ENCODE measurements at regions of chr6 and their contacts with region 1.

Region 1: DNA sequence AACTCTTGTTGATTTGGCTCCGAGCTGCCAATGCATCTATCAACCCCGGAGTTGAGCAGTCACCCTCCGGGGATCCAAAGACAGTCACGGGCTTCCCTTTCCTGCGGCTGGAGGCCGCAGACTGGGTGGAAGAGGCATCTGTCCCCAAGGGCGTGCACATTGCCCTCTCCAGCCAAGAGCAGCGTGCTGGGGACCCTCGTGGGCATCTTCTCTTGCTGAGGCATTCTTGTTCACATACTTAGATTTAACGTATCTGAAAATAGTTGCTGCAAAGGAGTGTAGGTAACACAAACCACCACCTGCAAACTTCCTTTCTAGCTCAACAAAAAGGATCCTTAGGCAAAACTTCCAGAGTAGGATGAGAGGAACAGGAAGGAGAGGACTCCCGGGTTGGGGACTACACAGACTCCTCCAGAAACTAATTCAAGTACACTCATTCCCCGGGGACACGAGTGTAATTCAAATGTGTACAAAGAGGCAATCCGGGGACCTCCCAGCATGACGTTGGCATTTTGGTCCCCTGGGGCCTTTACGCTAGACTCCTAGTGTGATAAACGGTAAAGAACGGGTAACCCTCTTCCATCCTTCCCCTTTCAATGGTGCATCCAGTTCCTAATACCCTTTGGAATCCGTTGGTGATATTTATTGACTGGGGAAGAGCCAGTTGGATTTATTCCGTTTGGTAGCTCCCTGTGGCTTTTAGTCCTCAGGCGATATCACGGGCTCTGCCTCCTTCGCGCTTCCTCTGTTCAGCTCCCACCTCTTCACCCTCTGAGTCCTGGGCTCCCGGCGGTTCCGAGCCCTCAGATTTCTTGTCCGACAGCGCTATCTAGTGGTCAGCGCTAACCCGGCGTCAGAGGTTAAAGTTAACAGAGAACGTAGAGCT is 2.7 kb upstream of the COL12A1 start:
- DNase-seq: peak; percentile 81 to 88
- ATAC-seq: peak; percentile 70 to 81 (median 75)
- H3K4me3 ChIP-seq: peak overlapping the region; percentile 47
- H3K27ac ChIP-seq: no peak overlapping the region
- H3K4me1 ChIP-seq: peaks cover 25% of the 10 kb centered on the region
- H3K27me3 ChIP-seq: peaks cover 0 to 48% (median 12%) of the 10 kb centered on the region in 3 donors
- CTCF ChIP-seq: peak; percentile 88

Region 2: DNA sequence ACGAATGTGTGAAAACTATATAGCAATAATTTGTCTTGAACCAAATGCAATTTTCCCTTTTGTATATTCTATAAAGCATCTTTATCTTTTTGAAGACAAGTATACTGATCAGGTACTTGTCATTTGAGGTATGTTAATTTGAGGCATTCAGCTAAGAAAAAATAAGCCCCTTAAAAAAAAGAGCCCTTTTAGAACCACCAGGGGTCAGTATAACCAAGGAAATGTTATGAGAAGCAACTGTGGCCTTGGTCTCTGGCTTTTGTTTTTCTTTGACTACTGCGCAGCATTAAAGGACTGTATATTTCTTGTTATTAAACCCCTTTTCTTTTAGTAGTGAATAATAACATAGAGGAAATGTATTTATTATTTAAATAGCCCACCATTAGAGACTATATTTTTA is 1469.4 kb before region 1 on chr6:
- intact Hi-C with region 1: loop called (anchors 2 to 5 kb)
- DNase-seq: no peak
- ATAC-seq: peak in 1 of 4 donors; percentile 48
- H3K4me3 ChIP-seq: no peak overlapping the region
- H3K27ac ChIP-seq: no peak overlapping the region
- H3K4me1 ChIP-seq: no peaks in the 10 kb centered on the region
- H3K27me3 ChIP-seq: no peaks in the 10 kb centered on the region
- CTCF ChIP-seq: peak; percentile 72

Region 3: DNA sequence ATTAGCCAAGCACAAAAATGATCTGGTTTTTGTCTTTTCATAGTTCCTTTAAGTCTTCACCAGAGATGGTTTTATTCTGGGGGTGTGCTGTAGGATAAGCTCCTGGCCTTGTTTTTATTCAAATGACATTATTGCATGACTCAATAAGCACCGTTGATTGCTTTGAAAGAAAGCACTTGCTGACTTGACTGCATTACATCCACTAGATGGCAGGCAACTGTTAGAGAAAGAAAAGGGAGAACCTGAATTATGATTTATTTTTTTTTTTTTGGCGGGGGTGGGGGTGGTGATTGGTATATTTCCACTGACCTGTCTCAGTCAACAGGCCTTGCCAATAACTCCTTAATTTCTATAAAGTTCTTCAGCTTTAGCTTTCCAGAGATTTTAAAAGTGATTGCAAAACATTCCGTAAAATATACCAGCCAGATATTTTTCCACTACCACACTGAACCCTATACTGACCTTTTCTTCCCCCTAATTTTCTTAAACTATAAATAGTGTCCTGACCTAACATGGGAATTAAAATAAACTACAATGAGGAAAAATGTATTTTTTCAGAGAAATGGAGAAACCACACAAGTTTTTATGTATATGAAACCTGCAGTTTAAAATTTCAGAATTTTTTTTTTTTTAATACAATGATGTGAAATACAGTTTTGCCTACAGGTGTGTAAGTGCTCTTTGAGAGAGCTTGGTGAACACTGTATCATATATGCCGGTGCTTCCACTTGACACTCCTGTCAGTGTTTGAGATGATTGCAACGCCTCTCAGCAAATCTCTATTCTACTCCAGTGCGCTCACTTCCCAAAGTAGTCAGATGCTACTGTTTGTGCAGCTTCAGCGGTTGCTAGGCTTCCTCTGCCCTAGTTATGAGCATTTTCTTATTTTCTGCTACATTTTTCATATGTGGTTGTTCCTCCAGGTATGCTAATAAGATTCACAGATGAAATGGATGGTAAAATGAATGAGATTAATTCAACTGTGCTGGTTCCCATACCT is 1238.3 kb before region 1 on chr6:
- intact Hi-C with region 1: loop called in 1 of 2 experiments (anchors 10 kb)
- DNase-seq: no peak
- ATAC-seq: no peak
- H3K4me3 ChIP-seq: no peak overlapping the region
- H3K27ac ChIP-seq: no peak overlapping the region
- H3K4me1 ChIP-seq: no peaks in the 10 kb centered on the region
- H3K27me3 ChIP-seq: peaks cover 0 to 3% (median 0%) of the 10 kb centered on the region in 3 donors
- CTCF ChIP-seq: peak; percentile 43

Region 4: DNA sequence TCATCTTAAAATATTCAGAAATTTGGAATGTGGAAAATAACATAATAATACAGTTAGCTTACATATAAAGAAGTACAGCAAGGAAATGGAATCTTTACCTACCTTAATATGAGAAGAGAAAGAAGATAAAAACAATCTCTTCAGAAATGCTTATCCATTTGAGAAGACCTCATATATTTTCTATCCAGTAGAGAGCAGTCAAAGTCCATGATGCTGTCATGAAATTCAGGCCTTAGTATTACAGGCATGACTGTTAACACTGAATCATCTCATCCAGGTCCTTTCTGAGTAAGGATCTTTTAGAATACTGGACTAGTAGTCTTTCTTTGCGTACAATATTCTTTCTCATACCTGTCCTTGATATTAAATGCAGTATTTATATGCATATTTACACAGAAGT is 799.1 kb before region 1 on chr6:
- intact Hi-C with region 1: loop called in 1 of 2 experiments (anchors 5 kb)
- DNase-seq: no peak
- ATAC-seq: peak in 3 of 4 donors; percentile 45 to 59 (median 57)
- H3K4me3 ChIP-seq: no peak overlapping the region
- H3K27ac ChIP-seq: no peak overlapping the region
- H3K4me1 ChIP-seq: no peaks in the 10 kb centered on the region
- H3K27me3 ChIP-seq: no peaks in the 10 kb centered on the region
- CTCF ChIP-seq: peak; percentile 30